ENCODE measurements at regions of chr12 and their contacts with region 1.

Region 1: GRCh38 chr12:9039397-9039977 is 50.1 kb downstream of the KLRG1 start:
- DNase-seq: peak in 4 of 14 experiments; percentile 25 to 80 (median 77)
- ATAC-seq: peak; percentile 89
- H3K4me3 ChIP-seq: no peak overlapping the region
- H3K4me3 Mint-ChIP-seq: peak overlapping the region; percentile 21
- H3K27ac ChIP-seq: no peak overlapping the region
- H3K27ac Mint-ChIP-seq: peak overlapping the region; percentile 80
- H3K4me1 ChIP-seq: peaks cover 39% of the 10 kb centered on the region
- H3K4me1 Mint-ChIP-seq: peaks cover 63% of the 10 kb centered on the region
- H3K27me3 ChIP-seq: no peaks in the 10 kb centered on the region
- H3K27me3 Mint-ChIP-seq: no peaks in the 10 kb centered on the region
- CTCF ChIP-seq: peak; percentile 88

Region 2: GRCh38 chr12:8780389-8780788 is 259.1 kb before region 1 on chr12:
- CTCF ChIA-PET with region 1: no interaction called
- POLR2A ChIA-PET with region 1: no interaction called
- intact Hi-C with region 1: loop called in 1 of 2 experiments (anchors 2 kb)
- DNase-seq: peak in 3 of 14 experiments; percentile 10 to 25 (median 16)
- ATAC-seq: no peak
- H3K4me3 ChIP-seq: no peak overlapping the region
- H3K4me3 Mint-ChIP-seq: no peak overlapping the region
- H3K27ac ChIP-seq: no peak overlapping the region
- H3K27ac Mint-ChIP-seq: no peak overlapping the region
- H3K4me1 ChIP-seq: no peaks in the 10 kb centered on the region
- H3K4me1 Mint-ChIP-seq: no peaks in the 10 kb centered on the region
- H3K27me3 ChIP-seq: no peaks in the 10 kb centered on the region
- H3K27me3 Mint-ChIP-seq: no peaks in the 10 kb centered on the region
- CTCF ChIP-seq: no peak

Region 3: GRCh38 chr12:8844665-8845064 is 194.8 kb before region 1 on chr12:
- CTCF ChIA-PET with region 1: no interaction called
- POLR2A ChIA-PET with region 1: no interaction called
- intact Hi-C with region 1: no loop called
- DNase-seq: no peak
- ATAC-seq: no peak
- H3K4me3 ChIP-seq: no peak overlapping the region
- H3K4me3 Mint-ChIP-seq: no peak overlapping the region
- H3K27ac ChIP-seq: no peak overlapping the region
- H3K27ac Mint-ChIP-seq: no peak overlapping the region
- H3K4me1 ChIP-seq: no peaks in the 10 kb centered on the region
- H3K4me1 Mint-ChIP-seq: no peaks in the 10 kb centered on the region
- H3K27me3 ChIP-seq: no peaks in the 10 kb centered on the region
- H3K27me3 Mint-ChIP-seq: no peaks in the 10 kb centered on the region
- CTCF ChIP-seq: no peak

Region 4: DNA sequence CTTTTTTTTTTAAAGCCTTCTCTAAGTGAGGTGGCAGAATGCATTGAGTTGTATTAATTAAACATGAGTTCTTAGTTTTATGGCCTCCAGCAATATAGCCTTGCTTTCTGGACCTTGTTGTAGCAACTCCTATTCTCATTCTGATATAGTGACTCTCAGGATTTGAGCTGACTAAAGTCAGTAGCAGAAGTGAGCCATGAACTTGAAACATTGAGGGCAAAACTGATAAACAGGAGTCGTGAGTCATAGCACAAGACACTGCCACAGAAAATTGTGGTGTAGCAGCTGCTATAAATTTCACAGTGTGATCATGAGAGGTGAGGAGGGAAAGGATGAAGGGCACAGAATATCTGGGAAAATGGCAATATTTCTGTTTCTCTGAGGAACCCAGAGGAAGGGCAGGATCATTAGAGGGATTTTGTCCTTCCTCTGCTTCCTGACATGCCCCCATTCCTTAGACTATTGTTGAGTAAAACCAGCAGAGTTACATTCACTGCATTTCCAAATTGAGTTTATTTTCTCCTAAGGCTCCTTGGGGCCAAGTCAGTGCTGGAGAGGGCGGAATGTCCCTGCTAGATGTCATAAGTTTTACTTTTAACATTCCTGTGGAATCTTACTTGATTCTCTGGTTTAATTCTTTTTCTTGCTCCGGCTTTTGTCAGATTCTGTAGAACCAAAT is 42.7 kb before region 1 on chr12:
- CTCF ChIA-PET with region 1: interaction called, 3 read pairs
- POLR2A ChIA-PET with region 1: no interaction called
- intact Hi-C with region 1: loop called in 1 of 2 experiments (anchors 5 kb)
- DNase-seq: peak in 6 of 14 experiments; percentile 4 to 54 (median 43)
- ATAC-seq: peak; percentile 68
- H3K4me3 ChIP-seq: no peak overlapping the region
- H3K4me3 Mint-ChIP-seq: peak overlapping the region; percentile 11
- H3K27ac ChIP-seq: peak overlapping the region in 1 of 2 donors; percentile 6
- H3K27ac Mint-ChIP-seq: peak overlapping the region; percentile 65
- H3K4me1 ChIP-seq: peaks cover 63% of the 10 kb centered on the region
- H3K4me1 Mint-ChIP-seq: peaks cover 73% of the 10 kb centered on the region
- H3K27me3 ChIP-seq: no peaks in the 10 kb centered on the region
- H3K27me3 Mint-ChIP-seq: no peaks in the 10 kb centered on the region
- CTCF ChIP-seq: no peak

Region 5: GRCh38 chr12:9027161-9028059 is 12.1 kb before region 1 on chr12:
- CTCF ChIA-PET with region 1: interaction called, 4 read pairs
- POLR2A ChIA-PET with region 1: interaction called, 17 read pairs
- intact Hi-C with region 1: loop called in 1 of 2 experiments (anchors 1 kb)
- DNase-seq: peak in 2 of 14 experiments; percentile 21 to 44
- ATAC-seq: no peak
- H3K4me3 ChIP-seq: no peak overlapping the region
- H3K4me3 Mint-ChIP-seq: peak overlapping the region; percentile 58
- H3K27ac ChIP-seq: peak overlapping the region; percentile 63 to 92
- H3K27ac Mint-ChIP-seq: no peak overlapping the region
- H3K4me1 ChIP-seq: peaks cover 83% of the 10 kb centered on the region
- H3K4me1 Mint-ChIP-seq: peaks cover 49% of the 10 kb centered on the region
- H3K27me3 ChIP-seq: no peaks in the 10 kb centered on the region
- H3K27me3 Mint-ChIP-seq: no peaks in the 10 kb centered on the region
- CTCF ChIP-seq: no peak